Activated CD8-positive, alpha-beta T cell treated with anti-CD3 and anti-CD28 coated beads, Interleukin-2, amount 10 ng/mL, durations not matched to agents 7 days and 5 days (primary cell): ENCODE measurements at regions of chr2 and their contacts with region 1.

Region 1: DNA sequence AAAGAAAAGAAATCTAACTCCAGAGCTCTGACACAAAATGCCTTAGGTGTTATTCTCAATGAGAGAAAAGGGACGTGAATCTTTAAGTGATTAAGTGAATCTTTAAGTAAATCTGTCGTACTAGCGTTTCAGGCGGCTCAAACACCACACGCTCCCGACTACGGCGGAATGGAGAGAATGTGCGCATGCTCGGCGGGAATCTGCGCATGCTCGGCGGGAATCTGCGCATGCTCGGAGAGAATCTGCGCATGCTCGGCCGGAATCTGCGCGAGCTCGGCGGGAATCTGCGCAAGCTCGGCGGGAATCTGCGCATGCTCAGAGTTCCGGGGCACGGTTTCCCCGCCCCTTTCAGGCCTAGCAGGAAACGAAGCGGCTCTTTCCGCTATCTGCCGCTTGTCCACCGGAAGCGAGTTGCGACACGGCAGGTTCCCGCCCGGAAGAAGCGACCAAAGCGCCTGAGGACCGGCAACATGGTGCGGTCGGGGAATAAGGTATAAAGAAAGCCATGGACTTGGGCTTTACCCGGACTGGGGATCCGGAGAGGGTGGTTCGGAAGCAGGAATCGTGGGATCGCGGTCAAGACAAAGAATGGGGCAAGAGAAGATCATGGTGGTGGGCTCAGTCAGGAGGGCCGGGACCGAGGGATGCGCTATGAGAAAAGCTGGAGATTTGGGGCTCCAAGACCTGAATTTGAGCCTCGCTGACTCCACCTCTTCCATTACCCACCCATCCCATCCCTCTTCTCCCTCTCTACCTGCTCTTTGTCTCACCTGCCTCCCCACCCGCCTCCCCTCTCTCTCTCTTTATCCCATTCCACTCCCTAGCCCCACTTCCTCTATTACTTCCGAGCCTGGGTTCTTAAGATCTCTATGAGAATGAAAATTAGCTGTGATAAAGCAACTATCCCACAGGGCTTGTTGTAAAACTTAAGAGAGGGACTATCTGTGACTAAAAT is at the start of gene XRCC5:
- DNase-seq: peak; percentile 98
- ATAC-seq: peak; percentile 80
- H3K4me3 Mint-ChIP-seq: peak within 1 kb of the TSS; percentile 99
- H3K27ac Mint-ChIP-seq: peak within 1 kb of the TSS; percentile 99
- H3K4me1 Mint-ChIP-seq: peaks cover 54% of the 10 kb centered on the region
- H3K27me3 Mint-ChIP-seq: no peaks in the 10 kb centered on the region
- total RNA-seq, gene XRCC5: 362 to 394 TPM

Region 2: GRCh38 chr2:216034065-216034464 is 75.2 kb before region 1 on chr2:
- CTCF ChIA-PET with region 1: interaction called, 43 read pairs
- POLR2A ChIA-PET with region 1: interaction called, 5 read pairs
- DNase-seq: peak; percentile 88
- ATAC-seq: peak; percentile 82
- H3K4me3 Mint-ChIP-seq: no peak overlapping the region
- H3K27ac Mint-ChIP-seq: peak overlapping the region; percentile 35
- H3K4me1 Mint-ChIP-seq: peaks cover 30% of the 10 kb centered on the region
- H3K27me3 Mint-ChIP-seq: no peaks in the 10 kb centered on the region

Region 3: DNA sequence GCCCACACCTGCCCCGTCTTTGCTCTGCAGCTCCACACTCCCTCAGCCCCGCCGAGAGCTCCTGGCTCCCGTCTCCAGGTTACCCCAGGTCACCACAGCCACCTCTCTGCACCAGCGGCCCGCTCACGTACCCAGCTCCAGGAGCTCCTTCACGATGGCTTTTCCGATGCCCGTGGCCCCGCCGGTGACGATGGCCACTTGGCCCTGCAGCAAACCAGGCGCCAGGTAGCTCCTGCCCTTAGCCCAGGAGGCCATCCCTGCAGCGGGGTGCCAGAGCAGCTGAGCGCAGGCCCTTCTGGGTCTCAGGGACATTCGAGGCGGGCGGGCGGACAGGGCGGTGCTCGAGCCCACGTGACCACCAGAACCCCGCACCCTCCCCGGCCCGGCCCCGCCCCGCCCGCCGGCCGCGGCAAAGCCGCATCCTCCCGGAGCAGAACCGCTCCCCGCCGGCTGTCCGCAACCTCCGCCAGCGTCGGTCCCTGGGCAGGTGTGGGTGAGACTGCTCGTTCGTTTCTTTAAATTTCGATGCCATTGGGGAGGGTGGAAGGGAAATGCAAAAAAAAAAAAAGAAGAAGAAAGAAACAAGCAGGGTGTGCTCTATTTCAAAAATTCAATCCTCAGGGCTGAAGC is 27.6 kb before region 1 on chr2 and contains the starts of genes PECR and TMEM169:
- CTCF ChIA-PET with region 1: interaction called, 76 read pairs
- POLR2A ChIA-PET with region 1: interaction called, 13 read pairs
- DNase-seq: peak; percentile 86
- ATAC-seq: peak; percentile 95
- H3K4me3 Mint-ChIP-seq: peak within 1 kb of the TSS; percentile 92
- H3K27ac Mint-ChIP-seq: peak within 1 kb of the TSS; percentile 83
- H3K4me1 Mint-ChIP-seq: peaks cover 54% of the 10 kb centered on the region
- H3K27me3 Mint-ChIP-seq: no peaks in the 10 kb centered on the region
- total RNA-seq, gene PECR: 29.0 to 30.3 TPM
- total RNA-seq, gene TMEM169: 1.2 to 1.4 TPM

Region 4: DNA sequence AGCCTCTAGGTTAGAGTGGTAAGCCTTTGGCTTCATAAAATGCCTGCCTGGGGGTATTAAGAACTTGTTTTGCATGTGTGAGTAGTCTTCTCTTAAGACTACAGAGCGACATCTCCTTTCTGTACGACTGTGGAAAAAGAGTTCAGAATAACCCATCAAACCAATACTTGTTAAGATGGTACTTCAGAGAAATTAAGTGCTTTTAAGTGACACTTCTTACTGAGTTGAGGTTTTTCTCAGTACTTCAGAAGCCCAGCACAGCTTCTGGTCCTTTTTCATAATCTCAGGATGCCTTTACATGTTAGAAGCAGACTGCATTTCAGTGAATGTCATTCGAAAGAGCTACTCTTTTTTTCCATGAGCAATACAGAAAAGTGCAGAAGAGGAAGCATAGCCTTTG is 10.7 kb after region 1 on chr2:
- CTCF ChIA-PET with region 1: interaction called, 42 read pairs
- POLR2A ChIA-PET with region 1: interaction called, 11 read pairs
- DNase-seq: peak; percentile 31
- ATAC-seq: peak; percentile 88
- H3K4me3 Mint-ChIP-seq: peak overlapping the region; percentile 52
- H3K27ac Mint-ChIP-seq: peak overlapping the region; percentile 88
- H3K4me1 Mint-ChIP-seq: peaks cover 77% of the 10 kb centered on the region
- H3K27me3 Mint-ChIP-seq: no peaks in the 10 kb centered on the region

Region 5: GRCh38 chr2:216139884-216140283 is 30.6 kb after region 1 on chr2:
- CTCF ChIA-PET with region 1: interaction called, 36 read pairs
- POLR2A ChIA-PET with region 1: interaction called, 7 read pairs
- DNase-seq: peak; percentile 54
- ATAC-seq: no peak
- H3K4me3 Mint-ChIP-seq: no peak overlapping the region
- H3K27ac Mint-ChIP-seq: peak overlapping the region; percentile 0
- H3K4me1 Mint-ChIP-seq: peaks cover 29% of the 10 kb centered on the region
- H3K27me3 Mint-ChIP-seq: no peaks in the 10 kb centered on the region